AG04449 (cell line): ENCODE measurements at regions of chr11 and their contacts with region 1.

Region 1: GRCh38 chr11:2699531-2700414 is at the start of gene KCNQ1OT1:
- DNase-seq: peak; percentile 60
- H3K4me3 ChIP-seq: peak within 1 kb of the TSS; percentile 77
- CTCF ChIP-seq: no peak

Region 2: GRCh38 chr11:2687782-2688191 is 12.0 kb before region 1 on chr11:
- CTCF ChIA-PET with region 1: interaction called, 3 read pairs
- POLR2A ChIA-PET with region 1: interaction called, 11 read pairs
- DNase-seq: no peak
- H3K4me3 ChIP-seq: no peak overlapping the region
- CTCF ChIP-seq: no peak